A673 (cell line): ENCODE measurements at regions of chr9 and their contacts with region 1.

Region 1: GRCh38 chr9:36625006-36625615 is 52.4 kb downstream of the MELK start:
- DNase-seq: no peak
- H3K4me3 ChIP-seq: no peak overlapping the region
- H3K27ac ChIP-seq: no peak overlapping the region
- H3K4me1 ChIP-seq: no peaks in the 10 kb centered on the region
- H3K27me3 ChIP-seq: no peaks in the 10 kb centered on the region
- CTCF ChIP-seq: no peak

Region 2: GRCh38 chr9:36575411-36575882 is 49.7 kb before region 1 on chr9:
- CTCF ChIA-PET with region 1: no interaction called
- POLR2A ChIA-PET with region 1: no interaction called
- intact Hi-C with region 1: loop called (anchors 2 kb)
- DNase-seq: no peak
- H3K4me3 ChIP-seq: peak overlapping the region; percentile 16
- H3K27ac ChIP-seq: peak overlapping the region; percentile 55
- H3K4me1 ChIP-seq: peaks cover 11% of the 10 kb centered on the region
- H3K27me3 ChIP-seq: no peaks in the 10 kb centered on the region
- CTCF ChIP-seq: no peak